ENCODE measurements at regions of chr14 and their contacts with region 1.

Region 1: GRCh38 chr14:59360923-59361794 is 104.0 kb downstream of the GPR135 start:
- DNase-seq: peak; percentile 47
- H3K4me3 ChIP-seq: peak overlapping the region; percentile 62
- H3K27ac ChIP-seq: peak overlapping the region; percentile 99
- H3K4me1 ChIP-seq: peaks cover 84% of the 10 kb centered on the region
- CTCF ChIP-seq: no peak; the same call in 1 of the 2 replicates

Region 2: GRCh38 chr14:59107819-59108428 is 253.2 kb before region 1 on chr14:
- CTCF ChIA-PET with region 1: no interaction called
- POLR2A ChIA-PET with region 1: no interaction called
- intact Hi-C with region 1: no loop called
- DNase-seq: peak; percentile 90
- H3K4me3 ChIP-seq: peak overlapping the region; percentile 35
- H3K27ac ChIP-seq: peak overlapping the region; percentile 68
- H3K4me1 ChIP-seq: peaks cover 38% of the 10 kb centered on the region
- CTCF ChIP-seq: peak; percentile 27; the same call in 1 of the 2 replicates

Region 3: DNA sequence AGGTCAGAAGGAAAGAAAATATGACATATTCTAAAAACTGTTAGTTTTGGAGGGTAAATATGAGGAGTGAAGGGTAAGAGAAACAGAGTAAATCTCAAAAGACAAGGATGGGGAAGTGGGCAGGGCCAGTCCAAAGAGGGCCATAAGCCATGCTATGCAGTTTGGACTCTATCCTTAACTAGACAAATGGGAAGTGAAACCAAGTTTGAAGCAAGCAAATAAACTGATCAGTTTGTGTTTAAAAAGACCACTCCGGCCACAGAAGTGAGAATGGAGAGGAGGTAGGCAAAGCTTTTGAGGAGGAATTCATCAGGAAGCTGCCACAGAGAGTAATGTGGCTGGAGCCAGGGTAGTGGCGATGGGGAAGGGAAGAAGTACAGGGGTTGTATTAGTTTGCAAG is 210.2 kb before region 1 on chr14:
- CTCF ChIA-PET with region 1: no interaction called
- POLR2A ChIA-PET with region 1: interaction called, 3 read pairs
- intact Hi-C with region 1: loop called (anchors 5 kb)
- DNase-seq: peak; percentile 82
- H3K4me3 ChIP-seq: peak overlapping the region; percentile 8
- H3K27ac ChIP-seq: peak overlapping the region; percentile 66
- H3K4me1 ChIP-seq: peaks cover 62% of the 10 kb centered on the region
- CTCF ChIP-seq: no peak

Region 4: DNA sequence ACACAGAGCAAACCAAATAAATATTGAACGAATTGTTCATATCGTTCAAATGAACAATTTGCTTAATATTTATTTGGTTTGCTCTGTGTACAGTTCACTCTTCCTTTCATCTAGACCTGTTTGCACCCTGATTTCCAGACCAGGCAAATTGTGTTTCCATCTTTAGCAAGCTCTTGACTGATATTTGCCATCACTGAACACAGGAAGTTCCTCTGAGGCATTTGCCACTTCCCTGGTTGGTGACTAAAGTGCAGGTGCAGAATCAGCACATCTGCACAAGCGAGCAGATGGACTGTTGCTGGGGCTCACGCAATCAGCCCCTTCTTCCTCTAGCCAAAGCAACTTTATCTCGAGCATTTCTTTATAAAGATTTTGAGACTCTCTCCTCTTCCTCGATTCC is 59.8 kb before region 1 on chr14:
- CTCF ChIA-PET with region 1: interaction called, 3 read pairs
- POLR2A ChIA-PET with region 1: interaction called, 23 read pairs
- intact Hi-C with region 1: loop called (anchors 1 kb)
- DNase-seq: peak; percentile 96
- H3K4me3 ChIP-seq: peak overlapping the region; percentile 57
- H3K27ac ChIP-seq: peak overlapping the region; percentile 99
- H3K4me1 ChIP-seq: peaks cover 98% of the 10 kb centered on the region
- CTCF ChIP-seq: no peak

Region 5: DNA sequence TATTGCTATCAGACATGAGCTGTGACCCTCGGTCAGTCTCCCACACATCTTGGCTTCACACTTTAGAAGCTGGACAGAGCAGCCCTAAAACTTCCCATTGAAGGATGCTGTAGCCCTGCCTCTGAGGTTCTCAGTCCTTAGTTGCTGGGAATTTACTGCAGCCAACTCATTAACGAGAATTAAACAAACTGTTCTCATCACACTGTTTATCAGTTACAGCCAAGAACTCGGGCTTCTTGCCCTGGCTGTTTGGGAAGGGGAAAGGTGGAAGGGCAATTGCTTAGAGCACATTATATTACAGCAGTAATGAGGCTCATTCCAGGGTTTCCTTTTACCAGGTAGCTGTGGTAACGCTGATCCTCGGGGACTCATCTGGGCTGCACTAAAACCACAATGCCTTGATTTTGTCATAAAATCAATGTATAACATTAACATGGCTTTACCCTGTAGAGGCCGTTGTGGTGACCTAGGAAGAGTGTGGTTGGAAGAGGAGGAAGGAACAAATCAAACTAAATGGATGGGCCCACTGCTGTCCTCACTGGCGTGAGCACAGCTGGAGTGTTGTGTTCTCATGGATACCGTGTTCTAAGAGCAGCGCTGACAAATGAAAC is 16.9 kb after region 1 on chr14:
- CTCF ChIA-PET with region 1: no interaction called
- POLR2A ChIA-PET with region 1: interaction called, 10 read pairs
- intact Hi-C with region 1: no loop called
- DNase-seq: no peak
- H3K4me3 ChIP-seq: no peak overlapping the region
- H3K27ac ChIP-seq: no peak overlapping the region
- H3K4me1 ChIP-seq: no peaks in the 10 kb centered on the region
- CTCF ChIP-seq: no peak

Region 6: GRCh38 chr14:59438195-59438647 is 77.1 kb after region 1 on chr14:
- CTCF ChIA-PET with region 1: no interaction called
- POLR2A ChIA-PET with region 1: no interaction called
- intact Hi-C with region 1: loop called (anchors 5 kb)
- DNase-seq: no peak
- H3K4me3 ChIP-seq: no peak overlapping the region
- H3K27ac ChIP-seq: no peak overlapping the region
- H3K4me1 ChIP-seq: no peaks in the 10 kb centered on the region
- CTCF ChIP-seq: no peak

Region 7: DNA sequence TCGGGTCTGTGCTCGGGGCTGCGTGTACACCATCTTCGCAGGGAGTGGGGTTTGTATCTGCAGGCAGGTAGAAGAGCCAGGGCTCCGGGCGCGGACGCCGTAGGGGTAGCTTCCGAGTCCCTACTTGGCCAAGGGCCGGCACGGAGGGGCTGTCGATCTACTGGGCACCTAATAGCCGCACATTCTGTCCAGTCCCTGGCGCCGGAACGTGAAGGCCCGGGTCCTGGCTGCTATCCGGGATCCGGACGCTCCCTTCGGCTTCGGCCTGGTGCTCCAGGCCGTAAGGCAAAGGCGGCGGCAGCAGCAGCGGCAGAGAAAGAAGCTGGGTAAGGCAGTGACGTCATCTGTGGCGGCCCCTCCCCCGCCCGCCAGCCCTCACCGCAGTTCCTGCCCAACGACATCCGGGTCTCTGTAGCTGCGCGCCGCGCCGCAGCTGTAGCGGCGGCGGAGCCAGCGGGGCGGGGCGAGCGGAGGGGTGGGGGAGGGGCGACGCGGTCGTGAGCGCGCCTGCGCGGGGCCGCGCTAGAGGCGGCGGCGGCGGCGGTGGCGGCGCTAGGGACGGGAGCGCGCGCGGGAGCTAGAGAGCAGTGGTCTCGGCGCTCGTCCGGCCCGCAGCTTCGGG is 887.6 kb after region 1 on chr14 and contains the start of gene PPM1A:
- CTCF ChIA-PET with region 1: no interaction called
- POLR2A ChIA-PET with region 1: no interaction called
- intact Hi-C with region 1: loop called (anchors 5 kb)
- DNase-seq: peak; percentile 97
- H3K4me3 ChIP-seq: peak within 1 kb of the TSS; percentile 87
- H3K27ac ChIP-seq: peak within 1 kb of the TSS; percentile 92
- H3K4me1 ChIP-seq: peaks cover 55% of the 10 kb centered on the region
- CTCF ChIP-seq: no peak
- total RNA-seq, gene PPM1A: 25.4 and 28.8 TPM in 2 replicates

Measured in OCI-LY7 (cell line).